ENCODE measurements at regions of chr13 and their contacts with region 1.

Region 1: GRCh38 chr13:25301347-25302047 is at the start of gene NUP58:
- DNase-seq: peak; percentile 89
- ATAC-seq: peak; percentile 99
- H3K4me3 Mint-ChIP-seq: peak within 1 kb of the TSS; percentile 91
- H3K27ac Mint-ChIP-seq: peak within 1 kb of the TSS; percentile 91
- H3K4me1 Mint-ChIP-seq: peaks cover 32% of the 10 kb centered on the region
- H3K27me3 Mint-ChIP-seq: peaks cover 19% of the 10 kb centered on the region
- CTCF ChIP-seq: no peak
- total RNA-seq, gene NUP58: 44.8 and 48.4 TPM in 2 replicates

Region 2: GRCh38 chr13:23384111-23384510 is 1917.4 kb before region 1 on chr13:
- CTCF ChIA-PET with region 1: no interaction called
- POLR2A ChIA-PET with region 1: no interaction called
- intact Hi-C with region 1: loop called (anchors 5 kb)
- DNase-seq: no peak
- ATAC-seq: peak; percentile 98
- H3K4me3 Mint-ChIP-seq: peak overlapping the region; percentile 36
- H3K27ac Mint-ChIP-seq: peak overlapping the region; percentile 87
- H3K4me1 Mint-ChIP-seq: peaks cover 35% of the 10 kb centered on the region
- H3K27me3 Mint-ChIP-seq: no peaks in the 10 kb centered on the region
- CTCF ChIP-seq: no peak

Region 3: GRCh38 chr13:24512197-24512907 is 789.1 kb before region 1 on chr13 and contains the start of gene PARP4:
- CTCF ChIA-PET with region 1: no interaction called
- POLR2A ChIA-PET with region 1: no interaction called
- intact Hi-C with region 1: loop called (anchors 5 kb)
- DNase-seq: peak; percentile 70
- ATAC-seq: peak; percentile 81
- H3K4me3 Mint-ChIP-seq: peak within 1 kb of the TSS; percentile 92
- H3K27ac Mint-ChIP-seq: peak within 1 kb of the TSS; percentile 88
- H3K4me1 Mint-ChIP-seq: peaks cover 24% of the 10 kb centered on the region
- H3K27me3 Mint-ChIP-seq: no peaks in the 10 kb centered on the region
- CTCF ChIP-seq: no peak
- total RNA-seq, gene PARP4: 50.0 and 56.7 TPM in 2 replicates

Region 4: DNA sequence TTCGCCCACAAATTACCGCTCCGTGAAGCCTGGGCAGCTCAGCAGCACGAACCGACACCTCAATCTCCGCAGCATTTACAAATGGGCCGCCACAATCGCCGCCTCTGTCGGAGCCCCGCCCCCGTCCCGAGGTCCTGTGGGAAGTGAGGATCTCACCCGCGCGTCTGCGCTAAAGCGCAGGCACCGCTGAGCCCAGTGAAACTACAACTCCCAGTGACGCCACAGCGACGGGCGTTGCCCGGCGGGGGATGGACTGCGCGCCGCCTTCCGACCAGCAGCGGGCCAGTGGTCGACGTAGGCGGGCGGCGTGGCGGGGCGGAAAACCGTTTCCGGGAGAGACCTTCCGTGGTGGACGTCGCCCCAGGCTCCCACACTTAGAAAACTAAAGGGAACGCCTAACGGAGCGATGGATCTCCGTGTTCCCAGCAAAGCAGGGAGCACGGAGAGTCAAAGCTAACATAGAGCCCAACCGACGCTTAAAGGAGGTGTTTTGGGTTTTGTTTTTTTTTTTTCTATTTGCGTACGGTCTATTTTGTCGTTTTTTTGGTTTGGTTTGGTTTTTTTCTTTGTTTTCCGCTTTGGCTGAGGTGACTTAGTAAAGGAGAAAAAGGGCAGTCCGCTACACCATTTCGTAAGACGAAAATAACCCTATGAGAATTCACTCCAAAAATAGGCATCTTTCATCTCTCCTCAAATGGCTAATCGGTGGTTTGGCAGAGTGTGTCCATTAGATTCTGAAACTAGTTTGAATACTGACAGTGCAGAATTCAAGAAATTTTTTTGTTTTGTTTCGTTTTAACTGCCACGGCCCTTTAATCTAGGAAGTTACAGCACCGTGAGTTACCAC is 378.5 kb before region 1 on chr13:
- CTCF ChIA-PET with region 1: no interaction called
- POLR2A ChIA-PET with region 1: no interaction called
- intact Hi-C with region 1: loop called (anchors 1 kb)
- DNase-seq: peak; percentile 91
- ATAC-seq: peak; percentile 97
- H3K4me3 Mint-ChIP-seq: peak overlapping the region; percentile 91
- H3K27ac Mint-ChIP-seq: peak overlapping the region; percentile 97
- H3K4me1 Mint-ChIP-seq: peaks cover 16% of the 10 kb centered on the region
- H3K27me3 Mint-ChIP-seq: no peaks in the 10 kb centered on the region
- CTCF ChIP-seq: no peak

Region 5: DNA sequence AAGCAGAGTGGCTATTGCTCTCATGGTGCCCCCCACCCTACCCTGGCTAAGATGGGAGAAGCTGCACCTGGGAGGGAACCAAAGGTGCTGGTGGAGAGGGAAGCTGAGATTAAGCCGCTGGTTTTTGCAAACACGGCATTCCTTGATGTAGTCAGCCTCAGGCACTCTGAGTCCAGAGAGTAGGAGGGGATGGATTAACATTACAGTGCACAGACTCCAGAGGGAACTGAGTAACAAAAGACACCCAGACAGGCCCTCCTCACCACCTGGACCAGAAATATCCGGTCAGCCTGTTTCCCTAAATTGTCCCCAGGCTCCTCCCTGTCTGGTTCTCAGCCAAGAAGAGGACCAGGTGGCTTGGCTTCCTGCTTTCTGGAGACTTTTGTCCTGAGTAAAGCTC is 234.4 kb before region 1 on chr13:
- CTCF ChIA-PET with region 1: no interaction called
- POLR2A ChIA-PET with region 1: no interaction called
- intact Hi-C with region 1: no loop called
- DNase-seq: no peak
- ATAC-seq: no peak
- H3K4me3 Mint-ChIP-seq: no peak overlapping the region
- H3K27ac Mint-ChIP-seq: no peak overlapping the region
- H3K4me1 Mint-ChIP-seq: peaks cover 8% of the 10 kb centered on the region
- H3K27me3 Mint-ChIP-seq: peaks cover 21% of the 10 kb centered on the region
- CTCF ChIP-seq: no peak

Region 6: DNA sequence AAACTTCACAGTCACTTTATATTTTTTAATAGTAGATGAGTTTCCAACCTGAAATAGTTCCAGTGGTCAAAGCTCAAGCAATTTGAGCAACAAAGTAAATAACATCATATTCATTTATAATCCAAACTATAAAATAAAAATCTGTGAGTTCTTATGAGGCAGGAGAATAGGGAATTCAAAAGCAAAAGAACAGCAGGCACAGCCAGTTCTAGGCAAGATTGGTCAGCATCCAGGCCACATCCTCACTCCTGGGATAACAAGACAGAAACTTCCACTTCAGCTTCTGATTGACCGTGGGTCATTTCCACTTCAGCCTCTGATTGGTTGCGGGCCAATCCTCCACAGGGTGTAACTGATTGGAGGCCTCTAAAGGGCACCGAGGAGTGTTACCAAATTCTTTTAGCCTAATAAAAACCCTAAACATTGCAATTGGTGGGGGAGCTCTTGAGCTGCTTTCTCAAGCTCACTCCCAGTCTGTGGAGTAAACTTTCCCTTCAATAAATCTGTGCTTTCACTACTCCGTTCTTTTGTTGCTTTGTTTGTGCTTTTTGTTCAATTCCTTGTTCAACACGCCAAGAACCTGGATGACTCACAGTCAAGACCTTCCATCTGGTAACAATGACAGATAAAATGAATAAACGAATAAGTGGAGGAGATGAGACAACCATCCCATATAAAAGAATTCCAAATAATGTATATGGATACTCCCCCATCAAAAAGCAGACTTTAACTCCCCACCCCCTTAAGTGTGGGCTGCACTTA is 86.8 kb before region 1 on chr13:
- CTCF ChIA-PET with region 1: no interaction called
- POLR2A ChIA-PET with region 1: no interaction called
- intact Hi-C with region 1: no loop called
- DNase-seq: no peak
- ATAC-seq: no peak
- H3K4me3 Mint-ChIP-seq: no peak overlapping the region
- H3K27ac Mint-ChIP-seq: no peak overlapping the region
- H3K4me1 Mint-ChIP-seq: no peaks in the 10 kb centered on the region
- H3K27me3 Mint-ChIP-seq: peaks cover 5% of the 10 kb centered on the region
- CTCF ChIP-seq: no peak

Region 7: DNA sequence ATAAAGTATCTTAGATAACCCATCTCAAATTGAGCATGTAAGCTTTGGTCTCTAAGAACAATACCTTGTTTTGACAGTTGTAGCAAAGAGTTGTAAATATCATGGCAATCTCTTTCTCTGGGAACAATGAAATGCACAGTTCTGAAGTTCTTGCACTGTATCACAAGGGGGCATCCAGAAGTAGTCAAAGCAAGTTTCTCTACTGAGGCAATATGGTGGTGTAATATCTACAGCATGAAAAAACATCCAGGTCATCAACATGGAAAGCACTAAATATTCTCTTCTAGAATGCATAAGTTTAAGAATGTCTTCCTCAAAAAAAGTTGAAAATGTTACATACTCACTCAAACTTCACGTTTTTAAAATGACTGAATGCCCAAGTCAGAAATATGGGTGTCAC is 33.8 kb before region 1 on chr13:
- CTCF ChIA-PET with region 1: no interaction called
- POLR2A ChIA-PET with region 1: no interaction called
- intact Hi-C with region 1: loop called (anchors 5 kb)
- DNase-seq: no peak
- ATAC-seq: peak; percentile 58
- H3K4me3 Mint-ChIP-seq: no peak overlapping the region
- H3K27ac Mint-ChIP-seq: no peak overlapping the region
- H3K4me1 Mint-ChIP-seq: no peaks in the 10 kb centered on the region
- H3K27me3 Mint-ChIP-seq: no peaks in the 10 kb centered on the region
- CTCF ChIP-seq: no peak

Region 8: GRCh38 chr13:26253787-26254582 is 952.5 kb after region 1 on chr13 and contains the start of gene CDK8:
- CTCF ChIA-PET with region 1: no interaction called
- POLR2A ChIA-PET with region 1: no interaction called
- intact Hi-C with region 1: loop called (anchors 5 kb)
- DNase-seq: peak; percentile 87
- ATAC-seq: peak; percentile 86
- H3K4me3 Mint-ChIP-seq: peak within 1 kb of the TSS; percentile 92
- H3K27ac Mint-ChIP-seq: peak within 1 kb of the TSS; percentile 88
- H3K4me1 Mint-ChIP-seq: peaks cover 36% of the 10 kb centered on the region
- H3K27me3 Mint-ChIP-seq: no peaks in the 10 kb centered on the region
- CTCF ChIP-seq: no peak
- total RNA-seq, gene CDK8: 10.9 and 12.8 TPM in 2 replicates

Measured in activated B cell treated with CpG ODN at 0.5 μM for 24 hours (primary cell).